ENCODE measurements at regions of chr1 and their contacts with region 1.

Region 1: GRCh38 chr1:94335950-94336349 is 82.2 kb upstream of the ABCD3 start:
- DNase-seq: peak; percentile 54
- H3K4me3 ChIP-seq: no peak overlapping the region
- H3K27me3 ChIP-seq: peaks cover 5% of the 10 kb centered on the region; the same call in 1 of the 2 replicates
- CTCF ChIP-seq: peak; percentile 82

Region 2: GRCh38 chr1:93909146-93910050 is 426.6 kb before region 1 on chr1 and contains the start of gene GCLM:
- CTCF ChIA-PET with region 1: interaction called, 17 read pairs
- POLR2A ChIA-PET with region 1: no interaction called
- DNase-seq: peak; percentile 74
- H3K4me3 ChIP-seq: peak within 1 kb of the TSS; percentile 90
- H3K27me3 ChIP-seq: no peaks in the 10 kb centered on the region
- CTCF ChIP-seq: peak; percentile 74
- polyA plus RNA-seq, gene GCLM: 19.1 and 35.1 TPM in 2 replicates

Region 3: GRCh38 chr1:94101541-94102525 is 234.1 kb before region 1 on chr1:
- CTCF ChIA-PET with region 1: interaction called, 13 read pairs
- POLR2A ChIA-PET with region 1: no interaction called
- DNase-seq: no peak
- H3K4me3 ChIP-seq: no peak overlapping the region
- H3K27me3 ChIP-seq: no peaks in the 10 kb centered on the region
- CTCF ChIP-seq: no peak

Region 4: GRCh38 chr1:94237291-94238226 is 98.4 kb before region 1 on chr1 and contains the start of gene ARHGAP29:
- CTCF ChIA-PET with region 1: interaction called, 11 read pairs
- POLR2A ChIA-PET with region 1: no interaction called
- DNase-seq: no peak
- H3K4me3 ChIP-seq: peak within 1 kb of the TSS; percentile 95
- H3K27me3 ChIP-seq: no peaks in the 10 kb centered on the region
- CTCF ChIP-seq: no peak
- polyA plus RNA-seq, gene ARHGAP29: 21.5 and 40.4 TPM in 2 replicates

Region 5: DNA sequence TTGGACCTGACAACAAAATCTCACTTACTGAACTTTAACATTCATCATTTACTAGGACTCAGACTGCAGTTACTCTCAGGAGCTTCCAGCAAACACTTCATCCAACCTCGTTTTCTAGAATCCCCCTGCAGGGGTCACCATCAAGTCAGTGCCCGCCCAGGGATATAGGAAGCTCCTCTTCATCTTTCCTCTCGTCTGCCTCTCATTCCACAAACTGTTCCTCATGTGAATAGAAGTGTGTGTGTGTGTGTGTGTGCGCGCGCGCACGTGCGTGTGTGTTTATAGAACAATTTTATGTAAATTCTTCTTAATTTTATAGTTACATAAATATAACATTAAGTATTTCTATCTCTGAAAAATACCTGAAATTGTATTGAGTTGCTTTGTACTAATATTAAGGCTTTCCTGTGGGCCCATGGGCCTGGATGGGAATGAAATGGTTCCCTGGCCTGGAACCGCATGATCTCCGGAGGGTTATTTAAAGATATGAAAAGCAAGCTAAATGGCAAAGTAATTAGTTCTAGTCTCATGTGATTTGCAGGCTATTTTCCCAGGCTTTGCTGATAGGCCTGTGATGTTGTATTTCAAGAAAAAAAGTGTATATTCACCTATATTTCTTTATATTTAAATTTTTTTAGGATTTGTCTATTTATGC is 60.5 kb after region 1 on chr1:
- CTCF ChIA-PET with region 1: no interaction called
- POLR2A ChIA-PET with region 1: no interaction called
- DNase-seq: no peak
- H3K4me3 ChIP-seq: no peak overlapping the region
- H3K27me3 ChIP-seq: peaks cover 3% of the 10 kb centered on the region; the same call in 1 of the 2 replicates
- CTCF ChIP-seq: no peak

Region 6: GRCh38 chr1:94463765-94464330 is 127.9 kb after region 1 on chr1:
- CTCF ChIA-PET with region 1: interaction called, 37 read pairs
- POLR2A ChIA-PET with region 1: no interaction called
- DNase-seq: peak; percentile 4
- H3K4me3 ChIP-seq: no peak overlapping the region
- H3K27me3 ChIP-seq: no peaks in the 10 kb centered on the region
- CTCF ChIP-seq: peak; percentile 63

Measured in BJ (cell line).